MCF 10A (cell line): ENCODE measurements at regions of chr10 and their contacts with region 1.

Region 1: GRCh38 chr10:133144771-133145170 is 15.2 kb upstream of the KNDC1 start:
- DNase-seq: no peak
- H3K4me3 Mint-ChIP-seq: no peak overlapping the region
- H3K27ac Mint-ChIP-seq: no peak overlapping the region
- H3K4me1 Mint-ChIP-seq: no peaks in the 10 kb centered on the region
- H3K27me3 Mint-ChIP-seq: peaks cover 32% of the 10 kb centered on the region
- CTCF ChIP-seq: no peak

Region 2: DNA sequence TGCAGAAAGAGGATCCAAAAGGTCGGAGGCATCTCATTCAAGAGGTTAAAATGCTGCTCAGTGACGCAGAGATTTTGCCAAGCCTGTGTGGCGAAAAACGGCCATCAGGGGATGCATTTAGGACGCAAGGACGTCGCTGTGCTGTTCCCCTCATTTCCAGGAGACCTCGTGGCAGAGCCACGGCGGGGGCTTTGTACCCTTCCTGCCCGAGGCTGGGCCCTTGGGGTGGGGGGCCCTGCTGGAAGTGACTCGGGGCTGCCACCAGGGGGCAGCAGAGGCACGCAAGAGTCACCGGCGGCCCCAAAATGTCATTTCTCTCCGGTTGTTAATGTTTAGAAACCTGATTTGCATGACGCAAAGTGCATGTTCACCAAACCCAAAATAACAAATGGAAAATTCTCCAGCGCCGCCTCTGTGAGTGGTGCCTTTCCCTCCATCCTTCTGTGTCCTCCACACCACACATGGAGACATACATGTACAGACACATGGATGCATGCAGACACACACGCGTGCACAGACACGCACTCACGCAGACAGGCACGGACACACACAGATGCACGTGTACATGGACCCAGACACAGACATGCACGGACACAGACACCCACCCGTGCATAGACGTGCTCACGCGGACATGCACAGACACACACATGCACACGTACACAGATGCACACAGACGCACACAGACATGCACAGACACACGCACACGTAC is 307.8 kb before region 1 on chr10:
- CTCF ChIA-PET with region 1: interaction called, 7 read pairs
- POLR2A ChIA-PET with region 1: no interaction called
- intact Hi-C with region 1: loop called (anchors 2 kb)
- DNase-seq: peak; percentile 10
- H3K4me3 Mint-ChIP-seq: no peak overlapping the region
- H3K27ac Mint-ChIP-seq: no peak overlapping the region
- H3K4me1 Mint-ChIP-seq: no peaks in the 10 kb centered on the region
- H3K27me3 Mint-ChIP-seq: peaks cover 35% of the 10 kb centered on the region
- CTCF ChIP-seq: peak; percentile 95

Region 3: GRCh38 chr10:133285217-133285616 is 140.4 kb after region 1 on chr10:
- CTCF ChIA-PET with region 1: no interaction called
- POLR2A ChIA-PET with region 1: no interaction called
- intact Hi-C with region 1: no loop called
- DNase-seq: no peak
- H3K4me3 Mint-ChIP-seq: no peak overlapping the region
- H3K27ac Mint-ChIP-seq: no peak overlapping the region
- H3K4me1 Mint-ChIP-seq: no peaks in the 10 kb centered on the region
- H3K27me3 Mint-ChIP-seq: no peaks in the 10 kb centered on the region
- CTCF ChIP-seq: no peak